ENCODE measurements at regions of chr11 and their contacts with region 1.

Region 1: GRCh38 chr11:65540297-65541092 is 15.6 kb downstream of the SCYL1 start:
- DNase-seq: peak; percentile 98

Region 2: GRCh38 chr11:65354265-65355012 is 186.1 kb before region 1 on chr11 and contains the start of gene TIGD3:
- CTCF ChIA-PET with region 1: no interaction called
- POLR2A ChIA-PET with region 1: no interaction called
- DNase-seq: peak; percentile 98

Region 3: DNA sequence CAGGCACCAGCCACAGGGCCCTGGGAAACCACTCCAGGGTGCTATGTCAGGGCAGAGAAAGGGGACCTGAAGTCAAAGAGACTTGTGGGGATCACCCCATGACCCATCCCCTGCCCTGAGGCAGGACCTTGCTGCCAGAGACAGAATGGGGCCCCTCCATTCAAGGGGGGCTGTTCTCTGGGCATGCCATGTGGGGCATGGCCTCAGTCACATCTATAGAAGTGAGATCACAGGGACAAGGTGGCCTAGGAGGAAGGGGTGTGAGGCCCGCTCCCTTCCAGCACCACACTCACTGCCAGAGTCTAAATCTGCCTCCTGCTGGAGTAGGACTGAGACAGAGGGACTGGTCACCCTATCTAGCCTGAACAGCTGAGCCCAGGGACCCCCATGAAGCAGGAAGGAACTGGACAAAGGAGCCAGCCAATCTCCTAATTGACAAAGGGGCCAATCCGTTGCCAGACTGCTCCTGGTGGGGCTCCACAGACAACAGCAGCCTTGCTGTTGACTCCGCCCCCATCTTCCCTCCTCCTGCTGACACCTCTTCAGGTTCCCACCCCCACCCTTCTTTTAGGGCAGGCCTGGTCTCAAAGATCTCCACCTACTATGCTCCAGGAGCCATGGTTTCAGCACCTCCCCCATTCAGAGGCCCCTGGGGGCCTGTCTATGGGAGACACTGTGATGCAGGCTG is 91.9 kb before region 1 on chr11:
- CTCF ChIA-PET with region 1: no interaction called
- POLR2A ChIA-PET with region 1: no interaction called
- DNase-seq: no peak

Region 4: GRCh38 chr11:65551572-65552398 is 11.3 kb after region 1 on chr11:
- CTCF ChIA-PET with region 1: interaction called, 19 read pairs
- POLR2A ChIA-PET with region 1: interaction called, 4 read pairs
- DNase-seq: no peak

Region 5: GRCh38 chr11:65558002-65558931 is 17.8 kb after region 1 on chr11 and contains the start of gene LTBP3:
- CTCF ChIA-PET with region 1: interaction called, 19 read pairs
- POLR2A ChIA-PET with region 1: interaction called, 5 read pairs
- DNase-seq: peak; percentile 67

Region 6: DNA sequence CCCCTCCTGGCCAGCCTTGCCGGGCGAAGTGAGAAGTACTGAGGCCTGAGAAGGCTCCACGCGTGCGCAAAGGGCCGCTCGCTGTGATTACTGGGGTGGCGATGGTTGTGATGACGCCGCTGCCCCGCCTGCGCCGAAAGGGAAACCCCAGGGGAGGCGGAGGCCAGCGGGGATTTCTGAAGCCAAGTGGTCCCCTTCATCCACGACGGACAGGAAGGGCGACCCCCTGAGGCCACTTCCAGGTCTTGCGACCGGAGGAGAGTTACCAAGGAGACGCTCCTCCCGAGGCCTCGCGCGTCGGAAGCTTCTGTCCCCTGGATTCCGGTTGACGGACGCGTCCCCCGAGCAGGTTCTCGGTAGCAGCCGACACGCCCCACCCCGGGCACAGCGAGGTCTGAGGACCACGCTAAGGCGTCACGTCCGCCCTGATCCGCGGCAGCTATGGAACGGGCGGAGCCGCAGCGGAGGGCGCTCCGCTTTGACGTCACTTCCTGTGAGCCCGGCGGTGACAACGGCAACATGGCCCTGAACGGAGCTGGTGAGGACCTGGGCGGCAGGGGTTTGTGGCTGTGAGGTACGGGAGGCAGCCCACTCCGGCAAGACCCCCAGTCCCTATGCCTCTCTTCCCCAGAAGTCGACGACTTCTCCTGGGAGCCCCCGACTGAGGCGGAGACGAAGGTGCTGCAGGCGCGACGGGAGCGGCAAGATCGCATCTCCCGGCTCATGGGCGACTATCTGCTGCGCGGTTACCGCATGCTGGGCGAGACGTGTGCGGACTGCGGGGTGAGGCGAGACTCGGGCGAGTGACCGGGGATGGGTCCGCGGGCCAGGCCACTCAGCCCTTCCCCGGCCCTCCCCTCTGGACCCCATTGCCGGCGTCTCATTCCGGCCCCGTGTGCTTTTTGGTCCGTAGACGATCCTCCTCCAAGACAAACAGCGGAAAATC is 29.8 kb after region 1 on chr11 and contains the start of gene ZNRD2:
- CTCF ChIA-PET with region 1: interaction called, 50 read pairs
- POLR2A ChIA-PET with region 1: interaction called, 16 read pairs
- DNase-seq: peak; percentile 96

Region 7: DNA sequence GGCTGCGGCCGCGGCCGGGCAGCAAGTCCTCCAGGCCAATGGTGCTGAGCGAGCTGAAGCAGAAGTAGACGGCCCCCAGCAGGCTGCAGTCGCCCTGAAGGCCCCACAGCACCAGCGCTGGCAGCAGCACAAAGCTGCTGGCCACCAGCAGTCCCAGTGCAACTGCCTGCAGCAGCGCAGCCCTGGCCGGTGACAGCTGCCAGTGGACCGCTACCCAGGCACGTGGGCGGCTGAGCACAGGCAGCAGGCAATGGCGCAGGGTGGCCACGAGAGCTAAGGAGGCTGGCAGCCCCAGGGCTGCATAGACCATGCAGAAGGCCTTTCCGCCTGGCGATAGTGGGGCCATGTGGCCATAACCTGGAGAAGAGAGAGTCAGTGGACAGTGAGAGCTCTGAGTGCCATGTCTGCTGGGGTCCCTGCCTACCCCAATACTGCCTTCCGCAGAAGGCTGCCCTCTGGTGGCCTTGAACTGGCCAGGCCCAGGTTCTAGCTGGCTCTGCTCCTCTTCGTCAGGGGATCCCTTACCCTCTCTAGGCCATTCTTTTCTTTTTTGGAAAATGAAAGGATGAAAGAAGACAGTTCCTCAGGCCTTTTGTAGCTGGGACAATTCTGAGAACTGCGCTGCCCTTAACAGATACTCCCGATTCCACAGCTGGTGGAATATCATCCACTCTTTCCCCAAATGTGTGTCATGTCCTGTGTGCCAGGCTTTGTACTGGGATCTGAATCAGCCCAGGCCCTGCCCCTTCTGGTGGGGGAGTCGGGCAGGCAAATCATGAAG is 53.2 kb after region 1 on chr11:
- CTCF ChIA-PET with region 1: interaction called, 40 read pairs
- POLR2A ChIA-PET with region 1: no interaction called
- DNase-seq: peak; percentile 57